GM12878 (cell line): ENCODE measurements at regions of chr19 and their contacts with region 1.

Region 1: DNA sequence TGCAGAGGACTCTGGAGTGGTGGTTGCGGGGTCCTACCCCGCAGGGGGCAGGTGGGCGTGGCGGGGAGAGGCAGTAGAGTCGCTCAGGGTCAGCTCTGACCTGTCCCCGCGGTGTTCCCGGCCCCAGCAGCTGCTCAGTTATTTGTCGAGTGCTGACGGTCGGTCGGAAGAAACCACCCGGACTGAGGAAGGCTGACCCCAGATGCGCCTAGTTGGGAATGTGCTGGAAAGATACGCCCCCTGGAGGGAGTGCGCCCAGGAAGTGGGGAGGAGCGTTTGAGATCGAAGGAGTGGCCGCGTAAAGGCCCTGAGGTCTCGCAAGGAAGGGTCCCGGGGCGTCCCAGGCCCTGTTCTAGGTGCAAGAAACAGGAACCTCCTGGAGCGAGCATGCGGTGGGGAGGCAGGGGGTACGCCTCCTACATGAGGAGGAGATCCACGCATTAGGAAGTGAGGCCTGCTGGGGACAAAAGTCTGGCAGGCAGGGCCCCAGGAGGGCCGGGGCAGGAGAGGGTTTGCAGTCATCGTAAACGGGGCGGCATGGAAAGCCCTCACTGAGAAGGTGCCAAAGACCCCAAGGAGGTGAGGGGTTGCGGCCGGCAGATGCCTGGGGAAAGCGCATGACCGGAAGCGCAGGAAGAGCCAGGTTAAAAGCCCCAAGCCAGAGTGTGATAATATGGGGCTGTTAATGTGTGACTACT is 9.2 kb downstream of the CCDC8 start:
- DNase-seq: no peak
- ATAC-seq: no peak
- H3K4me3 ChIP-seq: no peak overlapping the region
- H3K27ac ChIP-seq: no peak overlapping the region
- H3K4me1 ChIP-seq: no peaks in the 10 kb centered on the region
- H3K27me3 ChIP-seq: peaks cover 0 to 3% of the 10 kb centered on the region in 2 experiments; a peak in 3 of 4 replicates
- CTCF ChIP-seq: no peak
- EP300 ChIP-seq: no peak
- POLR2A ChIP-seq: no peak
- RAD21 ChIP-seq: no peak

Region 2: DNA sequence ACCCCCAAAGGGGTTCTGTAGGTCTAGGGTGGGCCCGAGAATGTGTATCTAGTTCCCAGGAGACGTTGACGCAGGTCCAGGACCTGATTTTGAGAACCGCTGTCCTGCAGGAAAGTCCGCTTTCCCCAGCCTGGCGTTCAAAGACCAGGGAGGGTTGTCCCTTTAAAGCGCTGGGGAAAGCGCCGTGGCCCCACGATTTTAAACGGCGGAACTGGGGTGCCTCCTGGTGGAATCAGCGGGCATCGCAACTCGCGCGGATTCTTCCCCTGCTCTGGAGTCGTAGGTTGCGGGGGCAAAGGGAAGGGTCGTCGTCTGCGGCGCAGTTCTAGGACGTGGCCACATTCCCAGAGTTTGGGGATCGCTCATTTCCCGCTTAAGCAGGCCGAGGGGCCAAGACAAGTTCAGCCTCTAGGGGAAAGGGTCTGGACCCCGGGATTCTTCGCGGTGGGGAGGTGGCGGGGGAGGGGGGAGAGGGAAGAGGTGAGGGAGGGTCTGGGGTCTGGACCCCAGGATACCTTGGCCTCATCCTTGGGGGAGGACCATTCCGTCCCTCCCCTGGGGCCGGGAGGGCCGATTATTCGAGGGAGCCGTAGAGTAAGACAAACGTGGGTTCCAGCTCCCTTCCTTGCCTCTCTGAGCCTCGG is 83.7 kb after region 1 on chr19:
- CTCF ChIA-PET with region 1: interaction called, 6 read pairs
- POLR2A ChIA-PET with region 1: no interaction called
- RAD21 ChIA-PET with region 1: interaction called, 4 read pairs
- SMC1A ChIA-PET with region 1: interaction called, 4 read pairs
- in situ Hi-C with region 1: loop called (anchors 5 kb)
- intact Hi-C with region 1: loop called (anchors 1 kb)
- DNase-seq: no peak
- ATAC-seq: peak; percentile 94
- H3K4me3 ChIP-seq: no peak overlapping the region
- H3K27ac ChIP-seq: no peak overlapping the region
- H3K4me1 ChIP-seq: no peaks in the 10 kb centered on the region
- H3K27me3 ChIP-seq: peaks cover 10 to 23% of the 10 kb centered on the region in 2 experiments; a peak in 3 of 4 replicates
- CTCF ChIP-seq: peak; percentile 89 to 94 (median 91)
- EP300 ChIP-seq: no peak
- POLR2A ChIP-seq: no peak
- RAD21 ChIP-seq: peak; percentile 97

Region 3: GRCh38 chr19:46513461-46514236 is 109.4 kb after region 1 on chr19:
- CTCF ChIA-PET with region 1: interaction called, 19 read pairs
- POLR2A ChIA-PET with region 1: no interaction called
- RAD21 ChIA-PET with region 1: no interaction called
- SMC1A ChIA-PET with region 1: no interaction called
- in situ Hi-C with region 1: no loop called
- intact Hi-C with region 1: loop called (anchors 1 kb)
- DNase-seq: no peak
- ATAC-seq: peak; percentile 95
- H3K4me3 ChIP-seq: no peak overlapping the region
- H3K27ac ChIP-seq: no peak overlapping the region
- H3K4me1 ChIP-seq: no peaks in the 10 kb centered on the region
- H3K27me3 ChIP-seq: no peaks in the 10 kb centered on the region; a peak in 1 of 4 replicates
- CTCF ChIP-seq: peak; percentile 86 to 95 (median 86)
- EP300 ChIP-seq: no peak
- POLR2A ChIP-seq: no peak
- RAD21 ChIP-seq: peak; percentile 73

Region 4: GRCh38 chr19:46537136-46538097 is 133.2 kb after region 1 on chr19:
- CTCF ChIA-PET with region 1: interaction called, 10 read pairs
- POLR2A ChIA-PET with region 1: no interaction called
- RAD21 ChIA-PET with region 1: no interaction called
- SMC1A ChIA-PET with region 1: no interaction called
- in situ Hi-C with region 1: no loop called
- intact Hi-C with region 1: no loop called
- DNase-seq: no peak
- ATAC-seq: peak; percentile 85
- H3K4me3 ChIP-seq: no peak overlapping the region
- H3K27ac ChIP-seq: no peak overlapping the region
- H3K4me1 ChIP-seq: no peaks in the 10 kb centered on the region
- H3K27me3 ChIP-seq: no peaks in the 10 kb centered on the region; a peak in 3 of 4 replicates
- CTCF ChIP-seq: peak; percentile 74 to 96 (median 95)
- EP300 ChIP-seq: no peak
- POLR2A ChIP-seq: no peak
- RAD21 ChIP-seq: no peak